Activated CD4-positive, alpha-beta memory T cell treated with anti-CD3 and anti-CD28 coated beads for 36 hours (primary cell): ENCODE measurements at regions of chr5 and their contacts with region 1.

Region 1: DNA sequence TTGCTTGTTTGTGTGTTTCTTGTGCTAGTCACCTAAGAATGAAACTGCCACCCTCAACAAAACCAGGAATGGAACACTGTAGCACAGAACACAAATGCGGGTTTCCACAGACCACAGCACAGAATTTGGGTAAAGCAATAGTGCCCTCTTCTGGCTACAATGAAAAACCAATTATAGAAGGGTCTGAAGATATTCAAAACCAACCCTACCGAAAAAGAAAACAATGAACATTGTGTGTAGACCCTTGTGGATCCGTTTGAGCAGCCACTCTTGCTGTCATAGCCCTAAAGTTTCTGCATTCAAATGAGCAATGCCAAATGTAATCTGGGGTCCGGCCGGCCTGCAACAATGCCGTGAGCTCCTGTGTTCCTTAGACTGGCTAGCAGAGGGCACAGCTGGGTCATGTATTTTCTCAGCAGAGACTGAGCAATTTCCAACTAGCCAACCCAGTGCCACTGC is 8.3 kb upstream of the ENC1 start:
- DNase-seq: peak; percentile 37
- H3K4me3 Mint-ChIP-seq: no peak overlapping the region
- H3K27ac Mint-ChIP-seq: no peak overlapping the region
- H3K4me1 Mint-ChIP-seq: no peaks in the 10 kb centered on the region
- H3K27me3 Mint-ChIP-seq: peaks cover 11% of the 10 kb centered on the region

Region 2: GRCh38 chr5:73945498-73945897 is 703.4 kb before region 1 on chr5:
- CTCF ChIA-PET with region 1: interaction called, 13 read pairs
- POLR2A ChIA-PET with region 1: no interaction called
- intact Hi-C with region 1: no loop called
- DNase-seq: peak; percentile 30
- H3K4me3 Mint-ChIP-seq: no peak overlapping the region
- H3K27ac Mint-ChIP-seq: no peak overlapping the region
- H3K4me1 Mint-ChIP-seq: no peaks in the 10 kb centered on the region
- H3K27me3 Mint-ChIP-seq: peaks cover 12% of the 10 kb centered on the region

Region 3: DNA sequence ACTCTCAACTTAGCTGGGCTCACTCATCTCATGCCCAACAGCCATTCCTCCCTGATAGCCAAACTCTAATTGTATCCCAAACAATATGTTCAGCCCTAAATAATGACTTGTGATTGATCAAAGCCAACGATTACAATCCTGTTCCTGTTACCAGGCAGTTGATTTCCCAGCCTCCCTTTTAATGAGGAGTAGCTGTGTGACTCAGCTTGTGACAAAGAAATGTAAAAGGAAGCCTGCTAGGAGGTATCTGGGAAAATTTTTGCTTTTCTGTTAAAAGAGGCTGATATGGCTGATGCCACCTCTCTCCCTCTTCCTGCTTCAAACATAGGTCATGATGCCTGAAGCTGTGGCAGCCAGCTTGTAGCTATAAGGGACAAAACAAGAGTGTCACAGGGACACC is 11.3 kb after region 1 on chr5:
- CTCF ChIA-PET with region 1: interaction called, 11 read pairs
- POLR2A ChIA-PET with region 1: no interaction called
- intact Hi-C with region 1: no loop called
- DNase-seq: no peak
- H3K4me3 Mint-ChIP-seq: no peak overlapping the region
- H3K27ac Mint-ChIP-seq: no peak overlapping the region
- H3K4me1 Mint-ChIP-seq: no peaks in the 10 kb centered on the region
- H3K27me3 Mint-ChIP-seq: peaks cover 13% of the 10 kb centered on the region